Thyroid gland (tissue), 4 donors: ENCODE measurements at regions of chr19 and their contacts with region 1.

Region 1: DNA sequence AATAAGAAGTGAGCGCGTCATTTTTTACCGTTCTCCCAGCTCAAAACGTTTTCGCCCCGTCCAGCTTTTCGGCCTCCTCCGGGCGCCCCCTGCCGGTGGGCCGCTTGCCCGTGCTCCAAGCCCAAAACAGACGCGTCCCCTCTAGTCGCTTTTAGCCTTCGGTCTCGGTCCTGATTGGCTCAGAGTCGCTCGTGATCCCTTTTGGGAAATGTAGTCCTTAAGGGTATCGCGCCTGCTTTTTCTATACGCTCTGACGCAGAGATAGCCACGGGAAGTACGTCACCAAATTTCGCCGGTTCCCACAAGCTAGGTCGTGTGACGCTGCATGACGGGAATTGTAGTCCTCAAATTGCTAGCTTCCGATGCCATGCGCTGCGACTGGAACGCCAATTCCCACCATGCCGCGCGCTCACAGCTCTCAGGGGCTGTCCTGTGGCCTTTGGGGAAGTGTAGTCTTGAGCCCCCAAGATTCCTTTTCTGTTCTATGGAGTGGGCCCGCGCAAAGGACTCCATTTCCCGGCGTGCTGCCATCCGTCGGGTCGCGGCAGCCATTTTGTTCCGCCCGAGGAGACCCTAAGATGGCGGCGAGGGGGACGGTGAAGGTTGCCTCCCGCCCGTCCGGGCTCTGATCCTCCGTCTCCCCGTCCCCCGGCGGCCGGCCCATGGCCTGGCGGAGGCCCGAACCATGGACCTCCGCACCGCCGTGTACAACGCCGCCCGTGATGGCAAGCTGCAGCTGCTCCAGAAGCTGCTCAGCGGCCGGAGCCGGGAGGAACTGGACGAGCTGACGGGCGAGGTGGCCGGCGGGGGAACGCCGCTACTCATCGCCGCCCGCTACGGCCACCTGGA is at the start of gene FEM1A:
- DNase-seq: peak; percentile 100
- H3K4me3 ChIP-seq: peak within 1 kb of the TSS; percentile 63 to 96 (median 92)
- H3K27ac ChIP-seq: peak within 1 kb of the TSS; percentile 94 to 96 (median 95)
- H3K4me1 ChIP-seq: peaks cover 14 to 17% of the 10 kb centered on the region in 2 donors
- H3K27me3 ChIP-seq: no peaks in the 10 kb centered on the region
- CTCF ChIP-seq: peak; percentile 95 to 98 (median 97)
- POLR2A ChIP-seq: peak in 1 of 2 donors; percentile 85
- total RNA-seq, gene FEM1A: 11.3 to 21.0 (median 15.8) TPM

Region 2: DNA sequence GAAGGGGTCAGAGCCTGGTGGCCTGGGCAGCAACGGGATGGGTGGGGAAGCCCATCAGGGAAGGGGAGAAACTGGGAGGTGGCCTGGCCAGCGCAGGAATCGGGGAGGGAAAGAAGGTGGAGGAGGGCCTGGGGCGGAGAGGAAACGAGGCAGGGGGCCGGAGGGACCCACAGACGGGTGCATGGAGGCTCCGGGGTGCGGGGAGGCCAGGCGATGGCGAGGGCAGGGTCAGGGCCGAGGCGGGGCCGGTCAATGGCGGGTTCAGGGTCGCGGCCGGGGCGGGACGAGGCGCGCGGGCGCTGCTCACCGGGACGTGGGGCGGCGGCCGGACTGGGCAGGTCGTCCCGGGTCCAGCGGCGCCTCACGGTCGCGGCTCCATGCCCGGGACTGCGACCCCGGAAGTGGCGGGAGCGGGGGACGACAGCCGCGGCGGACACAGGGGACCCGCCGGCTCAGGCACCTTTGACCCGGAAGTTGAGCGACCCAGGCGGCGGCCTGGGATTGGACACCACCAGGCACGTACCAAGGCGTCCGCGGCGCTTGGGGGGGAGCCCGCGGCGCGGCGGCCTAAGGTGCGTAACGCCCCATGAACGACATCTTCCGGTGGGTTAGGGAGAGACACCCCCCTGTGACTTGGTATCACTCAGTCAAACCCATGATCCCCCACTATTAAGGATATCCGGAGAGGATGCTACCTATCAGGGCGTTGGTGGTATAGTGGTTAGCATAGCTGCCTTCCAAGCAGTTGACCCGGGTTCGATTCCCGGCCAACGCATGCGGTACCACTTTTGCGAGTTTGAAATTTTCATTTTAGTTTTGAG is 67.8 kb before region 1 on chr19 and contains the start of gene DPP9:
- intact Hi-C with region 1: loop called (anchors 5 kb)
- DNase-seq: peak; percentile 98
- H3K4me3 ChIP-seq: peak within 1 kb of the TSS; percentile 45 to 96 (median 87)
- H3K27ac ChIP-seq: peak within 1 kb of the TSS; percentile 52 to 82 (median 77)
- H3K4me1 ChIP-seq: peaks cover 9 to 10% of the 10 kb centered on the region in 2 donors
- H3K27me3 ChIP-seq: no peaks in the 10 kb centered on the region
- CTCF ChIP-seq: peak in 2 of 6 experiments; percentile 21 to 41
- POLR2A ChIP-seq: peak; percentile 26 to 63
- total RNA-seq, gene DPP9: 32.0 to 50.7 (median 42.9) TPM

Region 3: GRCh38 chr19:4732680-4733114 is 58.7 kb before region 1 on chr19:
- intact Hi-C with region 1: loop called (anchors 5 kb)
- DNase-seq: peak; percentile 24 to 27
- H3K4me3 ChIP-seq: no peak overlapping the region
- H3K27ac ChIP-seq: no peak overlapping the region
- H3K4me1 ChIP-seq: no peaks in the 10 kb centered on the region
- H3K27me3 ChIP-seq: no peaks in the 10 kb centered on the region
- CTCF ChIP-seq: peak; percentile 28 to 75 (median 54)
- POLR2A ChIP-seq: no peak

Region 4: GRCh38 chr19:4744451-4745174 is 46.8 kb before region 1 on chr19:
- intact Hi-C with region 1: no loop called
- DNase-seq: no peak
- H3K4me3 ChIP-seq: no peak overlapping the region
- H3K27ac ChIP-seq: no peak overlapping the region
- H3K4me1 ChIP-seq: peaks cover 0 to 12% of the 10 kb centered on the region in 2 donors
- H3K27me3 ChIP-seq: no peaks in the 10 kb centered on the region
- CTCF ChIP-seq: no peak
- POLR2A ChIP-seq: no peak

Region 5: DNA sequence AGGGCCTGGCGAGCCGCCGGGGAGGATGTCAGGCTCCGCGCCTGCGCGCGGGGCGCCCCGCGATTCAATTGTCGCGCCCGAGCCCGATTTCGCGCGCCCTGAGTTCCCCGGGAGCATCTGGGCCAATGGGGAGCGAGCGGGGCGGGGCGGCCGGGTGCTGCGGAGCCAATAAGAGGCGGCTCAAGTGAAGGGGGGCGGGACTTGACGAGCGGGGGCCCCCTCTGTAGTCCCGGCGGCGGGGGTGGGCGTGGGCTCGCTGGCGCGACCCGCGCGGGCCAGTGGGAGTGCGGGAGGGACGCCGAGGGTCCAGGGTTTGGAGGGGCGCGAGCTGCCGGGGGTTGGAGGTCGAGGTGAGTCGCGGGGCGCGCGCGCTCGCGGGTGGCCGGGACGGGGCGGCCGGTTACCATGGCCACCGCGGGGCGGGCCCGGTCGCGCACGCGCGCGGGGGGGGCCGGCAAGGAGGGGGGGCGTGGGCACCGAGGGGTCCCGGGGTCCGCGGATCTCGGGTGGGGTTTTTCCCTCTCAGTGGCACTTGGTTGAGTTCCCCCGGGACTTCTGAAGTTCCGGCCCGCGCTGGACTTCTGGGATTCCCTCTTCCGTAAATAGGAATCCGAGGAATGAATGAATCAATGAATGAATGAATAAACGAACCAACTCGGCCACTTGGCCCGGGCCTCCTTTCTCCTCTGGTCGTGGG is 118.7 kb after region 1 on chr19:
- intact Hi-C with region 1: no loop called
- DNase-seq: peak; percentile 90 to 93
- H3K4me3 ChIP-seq: peak overlapping the region in 2 of 3 donors; percentile 31 to 51
- H3K27ac ChIP-seq: no peak overlapping the region
- H3K4me1 ChIP-seq: peaks cover 13 to 27% of the 10 kb centered on the region in 2 donors
- H3K27me3 ChIP-seq: no peaks in the 10 kb centered on the region
- CTCF ChIP-seq: no peak
- POLR2A ChIP-seq: no peak